BJ (cell line): ENCODE measurements at regions of chr22 and their contacts with region 1.

Region 1: DNA sequence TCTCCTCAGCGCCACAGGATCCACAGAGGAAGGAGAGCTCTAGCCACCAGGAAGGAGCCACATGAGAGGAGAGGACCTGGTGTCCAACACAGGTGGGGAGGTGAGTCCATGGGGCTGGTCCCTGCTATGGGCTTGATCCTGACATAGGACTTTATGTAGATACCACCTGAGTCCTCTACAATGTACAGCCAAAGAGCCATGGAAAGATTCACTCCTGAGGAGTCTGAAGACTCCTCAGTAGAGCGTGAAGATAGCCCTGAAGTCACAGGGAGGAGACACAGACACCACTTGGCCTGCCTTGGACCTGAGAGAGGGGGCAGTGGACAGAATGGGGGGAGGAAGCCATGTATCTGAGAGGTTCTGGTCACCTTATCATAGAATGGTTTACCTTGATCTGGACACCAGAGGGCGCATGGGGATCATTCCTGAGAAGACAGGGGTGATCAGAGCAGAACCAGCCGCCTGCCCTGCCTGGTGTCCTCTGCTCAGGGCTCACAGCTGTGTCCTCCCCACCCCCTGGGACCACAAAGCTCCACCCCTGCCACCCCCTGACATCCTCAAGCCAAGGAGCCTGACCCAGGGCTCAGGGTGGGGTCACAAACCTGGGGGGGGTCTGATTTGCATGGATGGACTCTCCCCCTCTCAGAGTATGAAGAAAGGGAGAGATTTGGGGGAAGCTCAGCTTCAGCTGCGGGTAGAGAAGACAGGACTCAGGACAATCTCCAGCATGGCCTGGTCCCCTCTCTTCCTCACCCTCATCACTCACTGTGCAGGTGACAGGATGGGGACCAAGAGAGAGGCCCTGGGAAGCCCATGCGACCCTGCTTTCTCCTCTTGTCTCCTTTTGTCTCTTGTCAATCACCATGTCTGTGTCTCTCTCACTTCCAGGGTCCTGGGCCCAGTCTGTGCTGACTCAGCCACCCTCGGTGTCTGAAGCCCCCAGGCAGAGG is 77.0 kb downstream of the ZNF280B start:
- DNase-seq: no peak
- H3K4me3 ChIP-seq: no peak overlapping the region
- H3K27me3 ChIP-seq: no peaks in the 10 kb centered on the region; the same call in 1 of the 2 replicates
- CTCF ChIP-seq: peak; percentile 71

Region 2: GRCh38 chr22:22450343-22450839 is 18.8 kb after region 1 on chr22:
- CTCF ChIA-PET with region 1: interaction called, 10 read pairs
- POLR2A ChIA-PET with region 1: no interaction called
- DNase-seq: no peak
- H3K4me3 ChIP-seq: no peak overlapping the region
- H3K27me3 ChIP-seq: no peaks in the 10 kb centered on the region; the same call in 1 of the 2 replicates
- CTCF ChIP-seq: no peak